ENCODE measurements at regions of chr5 and their contacts with region 1.

Region 1: DNA sequence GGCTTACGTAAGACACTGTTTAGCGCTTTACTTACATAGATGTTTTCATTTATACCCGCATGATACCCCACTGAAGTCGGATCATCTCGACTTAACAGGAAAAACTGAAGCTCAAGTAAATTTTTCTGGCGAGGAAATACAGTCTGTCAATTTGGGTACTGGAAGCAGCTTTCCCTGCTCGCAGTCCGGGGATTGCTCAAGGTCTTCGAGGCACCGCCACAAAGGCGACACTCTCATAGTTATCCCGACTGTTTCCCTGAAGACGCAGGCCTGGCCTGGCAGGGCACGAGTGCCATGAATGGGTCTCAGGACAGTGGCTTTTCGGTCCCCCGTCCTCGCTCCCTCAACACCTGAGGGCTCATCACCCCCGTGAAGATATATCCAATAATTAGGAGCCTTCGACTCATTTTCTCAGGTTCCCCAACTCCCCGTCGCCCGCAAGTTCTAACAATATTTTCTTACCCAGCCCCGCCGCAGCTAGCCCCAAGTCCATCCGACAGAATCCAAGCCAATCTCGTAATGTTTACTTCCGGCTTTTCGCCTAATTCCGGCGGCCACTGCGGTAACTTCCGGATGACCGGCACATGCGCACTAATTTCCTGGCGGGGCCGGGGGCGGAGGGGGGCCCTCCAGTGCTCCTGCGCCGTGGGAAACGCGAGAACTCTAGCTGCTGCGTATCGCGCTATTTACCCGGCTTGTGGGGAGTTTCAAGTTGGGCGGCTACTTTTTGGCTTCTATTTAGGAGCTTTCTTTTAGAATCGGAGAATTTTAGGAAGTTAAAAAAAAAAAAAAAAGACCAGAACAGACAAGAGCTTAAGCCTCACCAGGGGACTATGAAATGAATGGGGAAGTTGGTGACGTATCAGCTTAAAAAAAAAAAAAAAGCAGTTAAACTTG is at the start of gene SLU7:
- DNase-seq: peak; percentile 90
- ATAC-seq: peak; percentile 85
- H3K4me3 ChIP-seq: peak within 1 kb of the TSS; percentile 81 to 99 (median 96)
- H3K27ac ChIP-seq: peak within 1 kb of the TSS; percentile 80
- H3K4me1 ChIP-seq: peaks cover 47% of the 10 kb centered on the region
- H3K27me3 ChIP-seq: no peaks in the 10 kb centered on the region; a peak in 1 of 5 replicates
- CTCF ChIP-seq: no peak
- EP300 ChIP-seq: no peak
- POLR2A ChIP-seq: peak; percentile 66 to 80
- RAD21 ChIP-seq: 0 out of 2 replicates have a peak, but pooled peaks have one; percentile 13
- total RNA-seq, gene SLU7: 39.2 and 52.6 TPM in 2 replicates

Region 2: DNA sequence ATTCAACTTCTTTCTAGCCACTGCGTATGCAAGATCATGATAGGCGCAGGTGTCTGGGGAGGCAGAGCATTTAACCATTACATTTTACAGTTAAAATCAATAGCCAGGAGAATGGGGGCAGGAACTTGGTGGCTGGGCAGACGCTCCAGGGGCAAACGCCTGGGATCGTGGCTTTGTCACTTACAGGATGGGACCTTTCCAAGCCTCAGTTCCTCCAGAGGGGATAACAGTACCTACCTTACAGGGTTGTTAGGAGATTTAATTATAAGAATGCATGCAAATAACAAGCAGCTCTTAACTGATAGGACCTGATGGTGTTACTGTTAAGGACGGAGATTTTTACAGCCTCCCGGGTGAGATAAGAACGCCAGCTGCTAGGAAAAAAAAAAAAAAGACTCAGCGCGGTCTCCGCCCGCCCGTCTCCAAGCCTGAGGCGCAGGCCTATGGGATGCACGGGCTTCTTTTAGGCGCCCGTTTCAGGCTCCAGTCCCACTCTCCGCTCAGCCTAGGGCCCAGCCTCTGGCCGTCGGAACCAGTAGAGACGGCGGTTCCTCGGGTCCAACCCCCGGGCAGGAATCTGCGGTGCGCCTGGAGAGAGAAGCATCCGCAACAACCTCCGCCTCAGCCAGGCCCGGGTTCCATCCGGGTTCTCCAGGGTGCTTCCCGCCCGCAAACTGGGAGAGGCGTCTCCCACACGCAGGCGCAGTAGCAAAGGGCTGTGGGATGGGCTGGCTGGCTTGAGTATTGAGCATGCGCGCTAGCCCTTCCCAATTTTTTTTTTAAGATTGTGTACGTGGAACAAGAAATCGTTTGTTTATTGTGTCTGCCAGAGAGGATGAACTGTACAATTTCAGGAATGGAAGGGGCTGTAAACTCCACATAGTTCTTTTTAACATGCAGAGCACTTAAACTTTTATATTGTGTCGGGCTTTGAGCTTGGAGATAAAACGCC is 19.1 kb before region 1 on chr5 and contains the start of gene FAM200C:
- CTCF ChIA-PET with region 1: no interaction called
- POLR2A ChIA-PET with region 1: interaction called, 11 read pairs
- in situ Hi-C with region 1: no loop called
- intact Hi-C with region 1: no loop called
- DNase-seq: peak; percentile 90
- ATAC-seq: peak; percentile 98
- H3K4me3 ChIP-seq: peak within 1 kb of the TSS; percentile 65 to 90 (median 83)
- H3K27ac ChIP-seq: peak within 1 kb of the TSS; percentile 89
- H3K4me1 ChIP-seq: peaks cover 20% of the 10 kb centered on the region
- H3K27me3 ChIP-seq: no peaks in the 10 kb centered on the region; a peak in 1 of 5 replicates
- CTCF ChIP-seq: no peak
- EP300 ChIP-seq: no peak
- POLR2A ChIP-seq: peak; percentile 94 to 96
- RAD21 ChIP-seq: no peak
- total RNA-seq, gene FAM200C: 4.7 and 6.4 TPM in 2 replicates

Measured in HepG2 (cell line).